ENCODE measurements at regions of chr19 and their contacts with region 1.

Region 1: DNA sequence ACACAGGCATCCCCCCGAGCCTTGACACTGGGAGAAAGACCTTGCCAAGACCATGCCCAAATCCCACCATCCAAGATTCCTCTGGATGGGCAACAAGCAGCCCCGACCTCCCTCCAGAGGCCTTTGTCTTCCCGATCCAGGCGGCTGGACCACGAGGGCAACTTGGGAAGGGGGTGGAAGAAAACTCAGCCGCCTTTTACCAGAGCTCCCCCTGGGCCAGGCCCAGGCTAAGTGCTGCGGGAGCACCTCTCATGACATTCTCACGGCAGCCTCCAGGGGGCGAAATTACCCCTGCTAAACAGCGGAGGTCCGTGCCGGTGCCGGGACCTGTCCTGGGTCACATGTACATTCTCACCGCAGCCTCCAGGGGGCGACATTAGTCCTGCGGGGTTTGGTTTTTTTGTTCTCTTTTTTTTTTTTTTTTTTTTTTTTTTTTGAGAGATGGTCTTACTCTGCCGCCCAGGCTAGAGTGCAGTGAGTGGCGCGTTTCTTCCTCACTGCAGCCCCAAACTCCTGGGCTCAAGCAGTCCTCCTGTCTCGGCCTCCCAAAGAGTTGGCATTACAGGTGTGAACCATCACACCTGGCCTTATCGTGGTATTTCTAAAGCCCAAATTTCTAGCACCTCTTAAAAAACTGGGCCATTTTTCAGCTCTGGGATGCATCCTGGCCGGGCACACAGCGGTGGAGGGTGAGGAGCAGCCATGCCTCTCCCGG is 2.1 kb upstream of the RSPH6A start:
- DNase-seq: peak; percentile 95 to 100
- H3K4me3 ChIP-seq: peak overlapping the region; percentile 42 to 68 (median 52); a peak in 6 of 8 replicates
- H3K27ac ChIP-seq: peak overlapping the region; percentile 86
- H3K4me1 ChIP-seq: peaks cover 0 to 23% (median 20%) of the 10 kb centered on the region in 4 experiments; a peak in 6 of 7 replicates
- H3K27me3 ChIP-seq: no peaks in the 10 kb centered on the region
- CTCF ChIP-seq: peak; percentile 97 to 99 (median 99)
- EP300 ChIP-seq: peak in 1 of 2 experiments; percentile 40; a peak in 1 of 3 replicates
- POLR2A ChIP-seq: peak; percentile 68 to 71; a peak in 2 of 3 replicates
- RAD21 ChIP-seq: peak; percentile 60 to 67

Region 2: DNA sequence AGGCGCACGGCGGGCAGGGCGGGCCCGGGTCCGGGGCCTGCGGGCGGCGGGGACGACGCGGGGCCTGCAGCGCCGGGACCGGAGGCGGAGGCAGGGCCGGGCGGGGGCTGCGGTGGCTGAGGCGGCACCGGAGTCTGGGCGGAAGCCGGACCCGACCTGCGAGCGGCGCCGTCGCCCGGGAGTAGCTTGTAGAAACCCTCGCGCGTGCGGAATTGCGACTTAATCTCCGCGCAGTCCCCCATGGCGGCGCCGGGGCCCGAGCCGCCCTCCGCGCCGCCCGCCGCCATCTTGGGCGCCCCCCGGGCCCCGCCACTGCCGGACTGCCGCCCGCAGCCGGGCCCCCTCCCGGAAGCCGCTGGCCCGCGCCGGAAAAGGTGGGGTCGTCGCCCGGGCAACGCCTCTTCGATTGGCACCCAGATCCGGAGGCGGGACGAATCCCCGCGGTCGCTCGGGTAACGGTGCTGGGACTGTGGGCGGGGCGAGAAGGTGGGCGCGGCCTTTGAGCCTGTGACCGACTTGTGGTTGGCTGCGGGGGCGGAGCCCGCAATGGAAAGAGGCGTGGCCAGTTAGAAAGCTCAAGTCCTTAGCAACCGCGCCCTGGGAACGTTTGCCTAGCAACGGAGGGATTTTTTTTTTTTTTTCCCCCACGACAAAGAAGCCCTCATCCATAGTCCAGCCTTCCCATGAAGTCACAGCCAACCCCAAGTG is 24.5 kb before region 1 on chr19 and contains the start of gene DMWD:
- CTCF ChIA-PET with region 1: interaction called, 7 read pairs
- POLR2A ChIA-PET with region 1: interaction called, 10 read pairs
- DNase-seq: peak; percentile 97 to 100
- H3K4me3 ChIP-seq: peak within 1 kb of the TSS; percentile 67 to 100 (median 86)
- H3K27ac ChIP-seq: peak within 1 kb of the TSS; percentile 83; the same call in 1 of the 2 replicates
- H3K4me1 ChIP-seq: peaks cover 0 to 6% (median 4%) of the 10 kb centered on the region in 4 experiments; a peak in 3 of 7 replicates
- H3K27me3 ChIP-seq: no peaks in the 10 kb centered on the region
- CTCF ChIP-seq: no peak
- EP300 ChIP-seq: no peak
- POLR2A ChIP-seq: peak in 1 of 2 experiments; percentile 80; a peak in 1 of 3 replicates
- RAD21 ChIP-seq: no peak
- total RNA-seq, gene DMWD: 41.0 and 41.6 TPM in 2 replicates

Region 3: GRCh38 chr19:45834970-45835369 is 17.8 kb after region 1 on chr19:
- CTCF ChIA-PET with region 1: interaction called, 42 read pairs
- POLR2A ChIA-PET with region 1: interaction called, 22 read pairs
- DNase-seq: no peak
- H3K4me3 ChIP-seq: no peak overlapping the region
- H3K27ac ChIP-seq: no peak overlapping the region
- H3K4me1 ChIP-seq: no peaks in the 10 kb centered on the region
- H3K27me3 ChIP-seq: no peaks in the 10 kb centered on the region
- CTCF ChIP-seq: no peak
- EP300 ChIP-seq: no peak
- POLR2A ChIP-seq: no peak
- RAD21 ChIP-seq: no peak

Region 4: GRCh38 chr19:45862564-45863334 is 45.6 kb after region 1 on chr19 and contains the start of gene SYMPK:
- CTCF ChIA-PET with region 1: interaction called, 9 read pairs
- POLR2A ChIA-PET with region 1: interaction called, 50 read pairs
- DNase-seq: peak; percentile 96 to 97
- H3K4me3 ChIP-seq: peak within 1 kb of the TSS; percentile 81 to 99 (median 90)
- H3K27ac ChIP-seq: peak within 1 kb of the TSS; percentile 90
- H3K4me1 ChIP-seq: peaks cover 0 to 18% (median 8%) of the 10 kb centered on the region in 4 experiments; a peak in 6 of 7 replicates
- H3K27me3 ChIP-seq: no peaks in the 10 kb centered on the region; a peak in 1 of 7 replicates
- CTCF ChIP-seq: no peak
- EP300 ChIP-seq: no peak
- POLR2A ChIP-seq: peak; percentile 80 to 90
- RAD21 ChIP-seq: no peak
- total RNA-seq, gene SYMPK: 81.5 and 93.6 TPM in 2 replicates

Region 5: DNA sequence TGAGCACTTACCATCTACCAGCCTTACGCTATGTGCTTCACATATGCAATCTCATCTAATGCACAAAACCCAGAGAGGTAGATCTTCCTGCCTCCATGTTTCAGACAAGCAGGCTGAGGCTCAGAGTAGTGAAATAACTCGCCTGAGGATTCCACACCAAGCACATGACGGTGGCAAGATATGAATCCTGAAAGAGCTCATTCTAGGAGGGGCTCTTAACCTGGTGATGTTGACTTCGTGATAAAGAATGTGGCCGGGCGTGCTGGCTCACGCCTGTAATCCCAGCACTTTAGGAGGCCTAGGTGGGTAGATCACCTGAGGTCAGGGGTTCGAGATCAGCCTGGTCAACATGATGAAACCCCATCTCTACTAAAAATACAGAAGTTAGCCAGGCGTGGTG is 151.5 kb after region 1 on chr19:
- CTCF ChIA-PET with region 1: no interaction called
- POLR2A ChIA-PET with region 1: no interaction called
- DNase-seq: no peak
- H3K4me3 ChIP-seq: no peak overlapping the region
- H3K27ac ChIP-seq: no peak overlapping the region
- H3K4me1 ChIP-seq: peaks cover 2 to 9% (median 7%) of the 10 kb centered on the region in 4 experiments; a peak in 5 of 7 replicates
- H3K27me3 ChIP-seq: peaks cover 0 to 5% (median 2%) of the 10 kb centered on the region in 4 experiments; a peak in 3 of 7 replicates
- CTCF ChIP-seq: no peak
- EP300 ChIP-seq: no peak
- POLR2A ChIP-seq: no peak
- RAD21 ChIP-seq: no peak